Activated naive CD4-positive, alpha-beta T cell treated with anti-CD3 and anti-CD28 coated beads for 36 hours (primary cell): ENCODE measurements at regions of chr7 and their contacts with region 1.

Region 1: DNA sequence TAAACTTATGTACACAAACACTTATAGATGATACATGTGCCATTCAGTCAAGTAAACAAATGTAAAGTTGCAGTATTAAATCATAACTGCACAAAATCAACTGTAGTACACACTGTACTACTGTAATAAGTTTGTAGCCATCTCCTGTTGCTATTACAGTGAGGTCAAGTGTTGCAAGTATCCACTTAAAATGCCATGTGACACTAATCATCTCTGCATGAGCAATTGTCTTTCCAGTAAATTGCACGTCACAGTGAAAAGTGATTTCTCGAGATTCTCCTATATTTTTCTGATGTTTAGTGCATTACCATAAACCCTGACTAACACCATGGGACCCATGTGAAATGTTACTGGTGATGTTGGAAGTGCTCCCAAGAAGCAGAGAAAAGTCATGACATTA is 293.3 kb upstream of the SP4 start:
- DNase-seq: no peak
- H3K4me3 Mint-ChIP-seq: no peak overlapping the region
- H3K27ac Mint-ChIP-seq: no peak overlapping the region
- H3K4me1 Mint-ChIP-seq: no peaks in the 10 kb centered on the region
- H3K27me3 Mint-ChIP-seq: peaks cover 20% of the 10 kb centered on the region

Region 2: DNA sequence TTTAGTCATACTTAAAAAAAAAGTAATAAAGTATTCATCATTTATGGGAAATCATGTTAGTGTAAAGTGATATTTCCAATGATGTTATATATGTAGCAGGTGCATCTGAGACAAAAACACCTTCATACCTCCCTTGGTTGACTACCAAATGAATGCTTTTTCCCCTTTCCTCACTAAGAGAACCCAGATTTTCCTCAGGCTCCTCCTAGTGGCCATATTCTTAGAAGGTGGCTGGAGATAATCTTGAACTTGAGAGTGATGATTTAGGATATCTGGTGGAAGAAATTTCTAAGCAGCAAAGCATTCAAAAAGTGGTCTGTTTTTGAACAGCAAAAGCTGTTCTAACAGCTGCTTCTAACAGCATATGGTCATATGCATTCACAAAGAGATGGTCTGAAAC is 391.4 kb after region 1 on chr7:
- CTCF ChIA-PET with region 1: no interaction called
- intact Hi-C with region 1: loop called (anchors 5 kb)
- DNase-seq: no peak
- H3K4me3 Mint-ChIP-seq: no peak overlapping the region
- H3K27ac Mint-ChIP-seq: no peak overlapping the region
- H3K4me1 Mint-ChIP-seq: no peaks in the 10 kb centered on the region
- H3K27me3 Mint-ChIP-seq: no peaks in the 10 kb centered on the region